ENCODE measurements at regions of chr6 and their contacts with region 1.

Region 1: DNA sequence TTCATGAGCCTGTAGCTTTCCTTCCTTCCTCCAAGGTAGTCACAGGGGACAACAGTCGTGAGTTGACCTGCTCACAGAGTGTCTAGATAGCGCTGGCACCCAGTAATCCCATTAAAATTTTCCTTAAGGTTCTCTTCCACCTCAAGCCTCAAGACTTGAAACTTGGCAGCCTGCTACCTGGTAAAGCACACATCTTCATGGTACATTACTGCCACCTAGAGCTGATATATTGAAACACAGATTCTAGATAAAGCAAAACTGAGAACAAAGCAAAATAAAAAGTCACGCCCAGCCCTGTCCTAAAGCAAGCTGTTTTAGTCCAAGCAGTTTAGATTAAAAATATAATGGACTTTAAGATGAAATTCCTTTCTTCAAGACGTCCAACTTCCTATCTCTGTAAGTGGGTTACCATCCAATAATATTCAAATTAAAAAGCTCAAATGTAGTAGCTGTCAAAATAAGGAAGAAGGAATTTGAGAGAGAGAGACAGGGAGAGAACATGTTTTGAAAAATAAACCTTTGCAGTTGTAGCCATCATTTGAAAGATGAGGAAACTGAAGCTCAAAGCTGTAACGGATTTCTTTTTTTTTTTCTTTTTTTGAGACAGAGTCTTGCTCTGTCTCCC is 50.7 kb upstream of the CD83 start:
- DNase-seq: no peak
- H3K4me3 ChIP-seq: no peak overlapping the region
- H3K27ac ChIP-seq: no peak overlapping the region
- H3K4me1 ChIP-seq: peaks cover 0 to 13% (median 4%) of the 10 kb centered on the region in 6 donors
- H3K27me3 ChIP-seq: peaks cover 0 to 9% (median 0%) of the 10 kb centered on the region in 7 donors
- CTCF ChIP-seq: peak; percentile 32 to 74 (median 65)
- POLR2A ChIP-seq: no peak

Region 2: GRCh38 chr6:13759025-13759424 is 307.9 kb before region 1 on chr6:
- intact Hi-C with region 1: no loop called
- DNase-seq: no peak
- H3K4me3 ChIP-seq: no peak overlapping the region
- H3K27ac ChIP-seq: no peak overlapping the region
- H3K4me1 ChIP-seq: peaks cover 0 to 20% (median 14%) of the 10 kb centered on the region in 6 donors
- H3K27me3 ChIP-seq: no peaks in the 10 kb centered on the region
- CTCF ChIP-seq: no peak
- POLR2A ChIP-seq: no peak

Region 3: GRCh38 chr6:13795041-13795750 is 271.7 kb before region 1 on chr6:
- intact Hi-C with region 1: loop called (anchors 10 kb)
- DNase-seq: peak; percentile 91
- H3K4me3 ChIP-seq: no peak overlapping the region
- H3K27ac ChIP-seq: no peak overlapping the region
- H3K4me1 ChIP-seq: peaks cover 0 to 14% (median 0%) of the 10 kb centered on the region in 6 donors
- H3K27me3 ChIP-seq: no peaks in the 10 kb centered on the region
- CTCF ChIP-seq: peak; percentile 80 to 93 (median 89)
- POLR2A ChIP-seq: no peak

Region 4: DNA sequence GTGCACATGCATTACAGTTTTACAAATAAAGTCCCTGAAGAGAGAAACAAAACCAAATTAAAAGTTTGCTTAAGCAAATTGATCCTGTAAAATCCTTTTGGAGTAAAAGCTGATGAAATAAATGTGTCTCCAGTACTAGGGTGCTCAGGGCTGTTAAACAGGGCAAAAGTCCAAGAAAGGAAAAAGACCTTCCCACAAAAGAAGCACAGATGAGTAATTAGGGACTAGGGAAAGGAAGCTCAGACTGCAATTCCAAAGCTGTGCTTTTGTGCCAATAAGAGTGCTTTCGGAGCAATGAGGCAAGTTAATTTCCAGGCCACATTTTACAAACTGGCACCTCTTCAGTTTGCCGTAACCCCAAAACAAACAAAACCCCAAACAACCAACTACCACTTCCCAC is 152.5 kb before region 1 on chr6:
- intact Hi-C with region 1: loop called (anchors 5 kb)
- DNase-seq: no peak
- H3K4me3 ChIP-seq: no peak overlapping the region
- H3K27ac ChIP-seq: no peak overlapping the region
- H3K4me1 ChIP-seq: no peaks in the 10 kb centered on the region
- H3K27me3 ChIP-seq: peaks cover 0 to 9% (median 0%) of the 10 kb centered on the region in 7 donors
- CTCF ChIP-seq: no peak
- POLR2A ChIP-seq: no peak

Region 5: DNA sequence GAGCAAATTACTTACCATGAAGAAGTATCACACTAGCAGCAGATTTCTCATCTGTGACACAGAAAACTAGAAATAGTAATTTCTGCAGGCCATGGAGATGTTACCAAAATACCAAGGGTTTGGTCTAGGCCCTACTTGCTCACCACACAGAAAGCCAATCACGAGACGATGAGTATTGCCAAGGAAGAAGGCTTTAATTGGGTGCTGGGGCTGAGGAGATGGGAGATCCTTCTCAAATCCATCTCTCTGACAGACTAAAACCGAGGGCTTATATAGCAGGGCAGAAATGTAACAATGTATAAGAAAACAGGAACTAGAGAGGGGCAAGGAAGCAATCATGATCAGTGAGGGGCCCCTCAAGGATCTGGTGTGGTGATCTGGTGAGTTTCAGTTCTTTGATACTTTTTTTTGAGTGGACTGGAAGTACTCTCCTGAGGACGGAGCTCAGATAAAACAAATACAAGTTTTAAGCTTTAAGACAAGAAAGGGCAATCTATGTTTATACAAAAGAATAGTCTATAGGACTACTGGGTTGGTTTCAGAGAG is 101.2 kb before region 1 on chr6:
- intact Hi-C with region 1: no loop called
- DNase-seq: no peak
- H3K4me3 ChIP-seq: no peak overlapping the region
- H3K27ac ChIP-seq: no peak overlapping the region
- H3K4me1 ChIP-seq: no peaks in the 10 kb centered on the region
- H3K27me3 ChIP-seq: peaks cover 0 to 24% (median 0%) of the 10 kb centered on the region in 7 donors
- CTCF ChIP-seq: no peak
- POLR2A ChIP-seq: no peak

Region 6: GRCh38 chr6:14243617-14244016 is 176.7 kb after region 1 on chr6:
- intact Hi-C with region 1: no loop called
- DNase-seq: no peak
- H3K4me3 ChIP-seq: no peak overlapping the region
- H3K27ac ChIP-seq: no peak overlapping the region
- H3K4me1 ChIP-seq: peaks cover 0 to 18% (median 12%) of the 10 kb centered on the region in 6 donors
- H3K27me3 ChIP-seq: no peaks in the 10 kb centered on the region
- CTCF ChIP-seq: no peak
- POLR2A ChIP-seq: no peak